ENCODE measurements at regions of chr6 and their contacts with region 1.

Region 1: GRCh38 chr6:75284632-75285286 is at the start of gene TMEM30A:
- DNase-seq: peak; percentile 98
- ATAC-seq: peak; percentile 97
- H3K4me3 ChIP-seq: peak within 1 kb of the TSS; percentile 85 to 91 (median 89)
- H3K27ac ChIP-seq: peak within 1 kb of the TSS; percentile 80
- H3K4me1 ChIP-seq: peaks cover 46% of the 10 kb centered on the region
- H3K27me3 ChIP-seq: no peaks in the 10 kb centered on the region; a peak in 1 of 5 replicates
- CTCF ChIP-seq: no peak
- EP300 ChIP-seq: no peak
- POLR2A ChIP-seq: peak; percentile 87 to 97
- RAD21 ChIP-seq: peak; percentile 12; the same call in 1 of the 2 replicates
- total RNA-seq, gene TMEM30A: 38.4 and 54.4 TPM in 2 replicates

Region 2: DNA sequence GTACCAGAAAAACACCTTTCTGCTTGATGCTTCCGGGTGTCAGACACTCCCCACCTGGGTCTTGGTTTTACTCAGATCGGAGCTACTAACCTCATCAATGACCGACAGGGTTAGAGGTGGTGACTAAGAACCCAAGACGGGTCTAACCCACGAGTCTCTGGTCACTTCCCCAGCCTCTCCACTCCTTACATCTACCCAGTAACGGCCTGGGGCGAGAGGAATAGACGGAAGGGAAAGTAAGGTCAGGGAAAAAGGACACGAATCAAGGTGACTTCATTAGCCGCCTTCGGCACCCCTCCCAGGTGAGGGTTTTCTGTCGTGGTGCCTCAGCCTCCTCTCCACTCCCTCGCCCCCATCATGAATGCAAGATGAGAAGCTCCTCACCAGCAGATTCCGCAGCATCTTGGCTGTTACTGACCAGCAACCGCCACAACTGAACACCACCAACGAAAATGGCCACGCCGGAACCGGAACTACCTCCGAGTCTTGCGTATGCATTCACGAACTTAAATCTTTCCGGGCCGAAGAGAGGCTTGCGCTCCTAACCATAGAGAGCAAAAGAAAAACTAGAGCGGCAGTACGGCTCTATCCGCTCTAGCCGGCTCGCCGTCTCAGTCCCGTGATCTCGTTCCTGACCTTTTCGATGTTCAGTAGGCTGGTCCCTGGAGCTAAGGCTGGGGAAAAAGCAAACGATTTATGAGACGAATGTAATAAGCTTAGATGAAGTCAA is 41.3 kb before region 1 on chr6 and contains the start of gene COX7A2:
- CTCF ChIA-PET with region 1: no interaction called
- POLR2A ChIA-PET with region 1: interaction called, 28 read pairs
- in situ Hi-C with region 1: no loop called
- intact Hi-C with region 1: loop called (anchors 1 kb)
- DNase-seq: peak; percentile 96
- ATAC-seq: peak; percentile 98
- H3K4me3 ChIP-seq: peak within 1 kb of the TSS; percentile 84 to 93 (median 89)
- H3K27ac ChIP-seq: peak within 1 kb of the TSS; percentile 91
- H3K4me1 ChIP-seq: peaks cover 22% of the 10 kb centered on the region
- H3K27me3 ChIP-seq: no peaks in the 10 kb centered on the region; a peak in 1 of 5 replicates
- CTCF ChIP-seq: 0 out of 2 replicates have a peak, but pooled peaks have one; percentile 5
- EP300 ChIP-seq: peak; percentile 35 to 40; a peak in 2 of 4 replicates
- POLR2A ChIP-seq: peak; percentile 86 to 96
- RAD21 ChIP-seq: no peak
- total RNA-seq, gene COX7A2: 481 and 556 TPM in 2 replicates

Region 3: DNA sequence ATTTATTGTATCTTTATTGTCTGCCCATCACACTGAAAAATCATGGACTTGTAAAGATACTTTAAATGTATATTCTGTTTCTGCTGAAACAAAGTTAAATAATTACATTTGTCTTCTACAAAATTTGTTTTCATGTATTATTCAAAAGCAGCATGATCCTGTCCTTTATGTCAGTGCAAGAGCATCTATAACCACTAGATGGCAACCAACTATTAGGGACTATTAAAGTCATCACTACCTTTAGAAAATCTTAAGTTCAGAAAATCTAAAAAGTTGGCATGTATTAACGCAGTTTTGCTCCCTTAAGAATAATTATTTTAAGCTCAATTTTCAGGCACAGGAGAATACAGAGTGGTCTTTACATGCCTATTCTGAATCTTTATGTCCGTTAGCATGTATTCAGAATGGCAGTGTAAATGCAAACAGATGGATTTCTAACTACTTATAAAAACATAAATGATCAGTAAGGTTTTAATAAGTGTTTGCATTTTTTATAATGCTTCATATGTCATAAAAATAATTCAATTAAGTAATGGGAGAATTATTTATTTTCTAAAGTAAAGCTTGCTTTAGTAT is 18.0 kb before region 1 on chr6:
- CTCF ChIA-PET with region 1: interaction called, 3 read pairs
- POLR2A ChIA-PET with region 1: interaction called, 8 read pairs
- in situ Hi-C with region 1: no loop called
- intact Hi-C with region 1: loop called (anchors 2 kb)
- DNase-seq: peak; percentile 42
- ATAC-seq: peak; percentile 77
- H3K4me3 ChIP-seq: no peak overlapping the region
- H3K27ac ChIP-seq: no peak overlapping the region
- H3K4me1 ChIP-seq: no peaks in the 10 kb centered on the region
- H3K27me3 ChIP-seq: no peaks in the 10 kb centered on the region
- CTCF ChIP-seq: peak; percentile 63
- EP300 ChIP-seq: no peak
- POLR2A ChIP-seq: no peak
- RAD21 ChIP-seq: peak; percentile 26; the same call in 1 of the 2 replicates

Region 4: DNA sequence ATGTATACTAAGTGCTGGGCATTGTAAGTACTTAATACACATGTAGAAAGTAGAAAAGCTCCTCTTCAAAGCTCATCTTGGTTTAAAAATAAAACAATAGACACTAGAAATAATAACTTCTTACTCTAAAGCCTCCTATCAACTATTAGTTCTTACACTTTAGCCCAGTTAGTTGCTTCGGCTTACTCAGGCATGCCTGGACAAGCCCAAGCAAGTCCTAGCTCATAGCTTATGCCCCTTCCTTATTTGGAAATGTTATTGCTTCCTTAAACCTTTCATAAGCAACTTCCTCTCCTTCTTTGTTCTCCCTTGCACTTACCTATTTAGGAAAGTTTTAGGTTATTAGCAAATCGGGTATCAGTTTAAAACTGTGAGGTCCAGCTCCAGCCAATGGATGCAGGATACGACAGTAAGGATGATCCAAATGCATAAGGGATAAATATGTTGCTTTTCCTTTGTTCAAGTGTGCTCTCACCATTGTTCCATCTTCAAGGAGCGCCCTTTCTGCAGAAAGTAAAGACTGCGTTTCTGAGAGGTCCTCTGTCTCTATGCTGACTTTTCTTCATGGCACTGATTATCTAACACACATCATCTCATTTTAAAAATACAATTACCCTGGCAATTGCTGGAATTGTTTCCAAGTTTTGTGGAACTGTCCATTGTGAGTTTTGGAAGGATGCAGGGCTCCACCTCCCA is 12.5 kb before region 1 on chr6:
- CTCF ChIA-PET with region 1: no interaction called
- POLR2A ChIA-PET with region 1: interaction called, 13 read pairs
- in situ Hi-C with region 1: no loop called
- intact Hi-C with region 1: loop called (anchors 2 kb)
- DNase-seq: no peak
- ATAC-seq: no peak
- H3K4me3 ChIP-seq: no peak overlapping the region
- H3K27ac ChIP-seq: peak overlapping the region; percentile 37
- H3K4me1 ChIP-seq: peaks cover 22% of the 10 kb centered on the region
- H3K27me3 ChIP-seq: no peaks in the 10 kb centered on the region
- CTCF ChIP-seq: no peak
- EP300 ChIP-seq: no peak
- POLR2A ChIP-seq: no peak
- RAD21 ChIP-seq: no peak

Region 5: GRCh38 chr6:75296811-75297779 is 12.3 kb after region 1 on chr6:
- CTCF ChIA-PET with region 1: no interaction called
- POLR2A ChIA-PET with region 1: interaction called, 5 read pairs
- in situ Hi-C with region 1: no loop called
- intact Hi-C with region 1: loop called (anchors 1 kb)
- DNase-seq: peak; percentile 57
- ATAC-seq: peak; percentile 56
- H3K4me3 ChIP-seq: no peak overlapping the region
- H3K27ac ChIP-seq: no peak overlapping the region
- H3K4me1 ChIP-seq: no peaks in the 10 kb centered on the region
- H3K27me3 ChIP-seq: no peaks in the 10 kb centered on the region
- CTCF ChIP-seq: peak; percentile 72
- EP300 ChIP-seq: no peak
- POLR2A ChIP-seq: no peak
- RAD21 ChIP-seq: peak; percentile 28; the same call in 1 of the 2 replicates

Region 6: DNA sequence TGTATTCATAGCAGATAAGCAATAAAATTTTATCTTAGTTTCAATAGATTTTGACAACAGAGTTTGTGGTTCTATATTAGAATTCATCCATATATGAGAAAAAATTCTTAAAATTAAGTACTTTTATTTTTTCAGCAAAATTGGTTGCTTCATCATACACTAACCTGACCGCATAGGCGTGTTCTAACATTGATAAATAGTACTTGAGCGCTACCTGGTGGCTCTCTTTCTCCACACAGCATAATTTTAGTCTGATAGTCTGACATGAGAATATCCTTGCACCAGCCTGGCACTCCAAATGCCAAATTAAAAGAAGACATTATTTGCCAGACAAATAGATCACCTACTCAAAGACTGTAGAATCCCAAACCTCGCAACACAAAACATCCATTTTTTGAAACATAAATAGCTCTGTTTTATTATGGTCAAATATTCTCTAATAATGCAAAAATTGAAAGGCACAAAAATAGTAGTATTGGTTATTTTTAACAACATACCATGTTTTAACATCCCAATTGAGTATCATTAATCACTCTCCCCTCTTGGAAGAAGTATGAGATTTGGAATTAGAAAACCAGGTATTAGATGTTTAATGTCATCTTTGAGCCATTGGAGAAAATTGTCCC is 241.9 kb after region 1 on chr6:
- CTCF ChIA-PET with region 1: no interaction called
- POLR2A ChIA-PET with region 1: interaction called, 5 read pairs
- in situ Hi-C with region 1: loop called (anchors 10 kb)
- intact Hi-C with region 1: no loop called
- DNase-seq: peak; percentile 56
- ATAC-seq: peak; percentile 76
- H3K4me3 ChIP-seq: no peak overlapping the region
- H3K27ac ChIP-seq: no peak overlapping the region
- H3K4me1 ChIP-seq: peaks cover 12% of the 10 kb centered on the region
- H3K27me3 ChIP-seq: no peaks in the 10 kb centered on the region
- CTCF ChIP-seq: peak; percentile 76
- EP300 ChIP-seq: no peak
- POLR2A ChIP-seq: no peak
- RAD21 ChIP-seq: peak; percentile 65

Region 7: GRCh38 chr6:75601304-75602245 is 316.8 kb after region 1 on chr6 and contains the start of gene SENP6:
- CTCF ChIA-PET with region 1: no interaction called
- POLR2A ChIA-PET with region 1: interaction called, 9 read pairs
- in situ Hi-C with region 1: no loop called
- intact Hi-C with region 1: loop called (anchors 5 kb)
- DNase-seq: peak; percentile 72
- ATAC-seq: peak; percentile 95
- H3K4me3 ChIP-seq: peak within 1 kb of the TSS; percentile 83 to 96 (median 90)
- H3K27ac ChIP-seq: peak within 1 kb of the TSS; percentile 95
- H3K4me1 ChIP-seq: peaks cover 39% of the 10 kb centered on the region
- H3K27me3 ChIP-seq: no peaks in the 10 kb centered on the region; a peak in 1 of 5 replicates
- CTCF ChIP-seq: 0 out of 2 replicates have a peak, but pooled peaks have one; percentile 9
- EP300 ChIP-seq: peak in 1 of 2 experiments; percentile 14; a peak in 1 of 4 replicates
- POLR2A ChIP-seq: peak; percentile 89 to 95
- RAD21 ChIP-seq: peak; percentile 12; the same call in 1 of the 2 replicates
- total RNA-seq, gene SENP6: 45.2 and 50.1 TPM in 2 replicates